Activated CD8-positive, alpha-beta T cell treated with anti-CD3 and anti-CD28 coated beads for 36 hours (primary cell): ENCODE measurements at regions of chr6 and their contacts with region 1.

Region 1: GRCh38 chr6:149431905-149432775 is 32.1 kb downstream of the SUMO4 start:
- DNase-seq: peak; percentile 96
- ATAC-seq: peak; percentile 97
- H3K4me3 Mint-ChIP-seq: peak overlapping the region; percentile 28
- H3K27ac Mint-ChIP-seq: peak overlapping the region; percentile 77
- H3K4me1 Mint-ChIP-seq: peaks cover 6% of the 10 kb centered on the region
- H3K27me3 Mint-ChIP-seq: no peaks in the 10 kb centered on the region
- CTCF ChIP-seq: peak; percentile 95

Region 2: GRCh38 chr6:149043476-149044130 is 388.5 kb before region 1 on chr6:
- CTCF ChIA-PET with region 1: interaction called, 16 read pairs
- POLR2A ChIA-PET with region 1: interaction called, 3 read pairs
- intact Hi-C with region 1: no loop called
- DNase-seq: peak; percentile 67
- ATAC-seq: peak; percentile 40
- H3K4me3 Mint-ChIP-seq: no peak overlapping the region
- H3K27ac Mint-ChIP-seq: no peak overlapping the region
- H3K4me1 Mint-ChIP-seq: peaks cover 41% of the 10 kb centered on the region
- H3K27me3 Mint-ChIP-seq: no peaks in the 10 kb centered on the region
- CTCF ChIP-seq: peak; percentile 43

Region 3: GRCh38 chr6:149075616-149076364 is 356.4 kb before region 1 on chr6:
- CTCF ChIA-PET with region 1: interaction called, 33 read pairs
- POLR2A ChIA-PET with region 1: interaction called, 4 read pairs
- intact Hi-C with region 1: no loop called
- DNase-seq: no peak
- ATAC-seq: peak; percentile 47
- H3K4me3 Mint-ChIP-seq: no peak overlapping the region
- H3K27ac Mint-ChIP-seq: peak overlapping the region; percentile 13
- H3K4me1 Mint-ChIP-seq: peaks cover 25% of the 10 kb centered on the region
- H3K27me3 Mint-ChIP-seq: no peaks in the 10 kb centered on the region
- CTCF ChIP-seq: no peak

Region 4: DNA sequence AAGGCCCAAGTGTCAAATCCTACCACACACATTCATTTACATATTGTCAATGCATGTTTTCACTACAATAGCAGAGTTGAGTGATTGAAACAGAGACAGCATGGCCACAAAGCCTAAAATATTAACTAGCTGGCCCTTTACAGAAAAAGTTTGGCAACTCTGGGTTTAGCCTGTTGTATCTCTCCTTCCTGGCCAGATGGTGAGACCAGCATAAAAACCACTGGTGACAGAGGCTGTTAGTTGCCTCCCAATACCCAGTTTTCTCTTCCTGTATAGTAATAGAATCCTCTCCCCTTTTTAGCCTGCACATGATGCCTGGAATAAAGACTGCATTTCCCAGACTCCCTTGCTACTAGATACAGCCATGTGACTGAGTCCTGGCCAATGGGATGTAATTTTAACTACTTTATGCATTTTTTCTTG is 214.7 kb before region 1 on chr6:
- CTCF ChIA-PET with region 1: interaction called, 11 read pairs
- POLR2A ChIA-PET with region 1: no interaction called
- intact Hi-C with region 1: no loop called
- DNase-seq: no peak
- ATAC-seq: no peak
- H3K4me3 Mint-ChIP-seq: no peak overlapping the region
- H3K27ac Mint-ChIP-seq: no peak overlapping the region
- H3K4me1 Mint-ChIP-seq: peaks cover 27% of the 10 kb centered on the region
- H3K27me3 Mint-ChIP-seq: no peaks in the 10 kb centered on the region
- CTCF ChIP-seq: no peak

Region 5: GRCh38 chr6:149410557-149410956 is 21.6 kb before region 1 on chr6:
- CTCF ChIA-PET with region 1: interaction called, 14 read pairs
- POLR2A ChIA-PET with region 1: no interaction called
- intact Hi-C with region 1: no loop called
- DNase-seq: no peak
- ATAC-seq: no peak
- H3K4me3 Mint-ChIP-seq: no peak overlapping the region
- H3K27ac Mint-ChIP-seq: peak overlapping the region; percentile 53
- H3K4me1 Mint-ChIP-seq: peaks cover 20% of the 10 kb centered on the region
- H3K27me3 Mint-ChIP-seq: no peaks in the 10 kb centered on the region
- CTCF ChIP-seq: no peak

Region 6: DNA sequence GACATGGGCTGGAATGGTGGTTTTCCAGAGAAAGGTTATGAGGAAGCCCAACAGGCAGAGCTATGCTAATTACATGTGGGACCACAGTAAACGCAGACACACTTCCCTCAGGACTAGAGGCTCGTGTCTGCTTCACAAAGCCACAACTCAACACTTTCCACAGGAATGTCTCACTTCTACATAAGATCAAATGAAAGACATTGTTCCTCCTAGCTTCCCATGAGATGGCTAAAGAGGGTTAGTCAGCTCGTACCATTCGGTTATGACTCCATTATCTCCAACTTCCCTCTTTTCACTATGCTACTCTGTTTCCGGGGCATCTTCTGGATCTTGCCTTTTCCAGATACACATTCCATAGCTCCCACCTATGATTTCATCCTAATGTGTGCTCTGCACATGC is 81.8 kb after region 1 on chr6:
- CTCF ChIA-PET with region 1: interaction called, 38 read pairs
- POLR2A ChIA-PET with region 1: interaction called, 3 read pairs
- intact Hi-C with region 1: loop called (anchors 5 kb)
- DNase-seq: no peak
- ATAC-seq: no peak
- H3K4me3 Mint-ChIP-seq: no peak overlapping the region
- H3K27ac Mint-ChIP-seq: no peak overlapping the region
- H3K4me1 Mint-ChIP-seq: peaks cover 51% of the 10 kb centered on the region
- H3K27me3 Mint-ChIP-seq: no peaks in the 10 kb centered on the region
- CTCF ChIP-seq: no peak